HepG2 (cell line): ENCODE measurements at regions of chr5 and their contacts with region 1.

Region 1: GRCh38 chr5:83641946-83642345 is 78.7 kb downstream of the HAPLN1 start:
- DNase-seq: no peak
- ATAC-seq: no peak
- H3K4me3 ChIP-seq: no peak overlapping the region
- H3K27ac ChIP-seq: no peak overlapping the region
- H3K4me1 ChIP-seq: no peaks in the 10 kb centered on the region
- H3K27me3 ChIP-seq: no peaks in the 10 kb centered on the region
- CTCF ChIP-seq: no peak
- EP300 ChIP-seq: no peak
- POLR2A ChIP-seq: no peak
- RAD21 ChIP-seq: no peak

Region 2: GRCh38 chr5:83595215-83595614 is 46.7 kb before region 1 on chr5:
- CTCF ChIA-PET with region 1: no interaction called
- POLR2A ChIA-PET with region 1: no interaction called
- in situ Hi-C with region 1: no loop called
- intact Hi-C with region 1: loop called (anchors 1 kb)
- DNase-seq: no peak
- ATAC-seq: no peak
- H3K4me3 ChIP-seq: no peak overlapping the region
- H3K27ac ChIP-seq: no peak overlapping the region
- H3K4me1 ChIP-seq: no peaks in the 10 kb centered on the region
- H3K27me3 ChIP-seq: peaks cover 0 to 5% of the 10 kb centered on the region in 2 experiments; a peak in 2 of 5 replicates
- CTCF ChIP-seq: no peak
- EP300 ChIP-seq: no peak
- POLR2A ChIP-seq: no peak
- RAD21 ChIP-seq: no peak

Region 3: GRCh38 chr5:83662558-83662957 is 20.6 kb after region 1 on chr5:
- CTCF ChIA-PET with region 1: no interaction called
- POLR2A ChIA-PET with region 1: no interaction called
- in situ Hi-C with region 1: no loop called
- intact Hi-C with region 1: no loop called
- DNase-seq: no peak
- ATAC-seq: no peak
- H3K4me3 ChIP-seq: no peak overlapping the region
- H3K27ac ChIP-seq: no peak overlapping the region
- H3K4me1 ChIP-seq: no peaks in the 10 kb centered on the region
- H3K27me3 ChIP-seq: no peaks in the 10 kb centered on the region; a peak in 1 of 5 replicates
- CTCF ChIP-seq: no peak
- EP300 ChIP-seq: no peak
- POLR2A ChIP-seq: no peak
- RAD21 ChIP-seq: no peak